Activated B cell treated with CpG ODN at 0.5 μM for 24 hours (primary cell): ENCODE measurements at regions of chr5 and their contacts with region 1.

Region 1: GRCh38 chr5:158898185-158899177 is 201.2 kb downstream of the EBF1 start:
- DNase-seq: peak; percentile 33
- ATAC-seq: peak; percentile 74
- H3K4me3 Mint-ChIP-seq: peak overlapping the region; percentile 25
- H3K27ac Mint-ChIP-seq: peak overlapping the region; percentile 93
- H3K4me1 Mint-ChIP-seq: peaks cover 78% of the 10 kb centered on the region
- H3K27me3 Mint-ChIP-seq: no peaks in the 10 kb centered on the region
- CTCF ChIP-seq: no peak

Region 2: DNA sequence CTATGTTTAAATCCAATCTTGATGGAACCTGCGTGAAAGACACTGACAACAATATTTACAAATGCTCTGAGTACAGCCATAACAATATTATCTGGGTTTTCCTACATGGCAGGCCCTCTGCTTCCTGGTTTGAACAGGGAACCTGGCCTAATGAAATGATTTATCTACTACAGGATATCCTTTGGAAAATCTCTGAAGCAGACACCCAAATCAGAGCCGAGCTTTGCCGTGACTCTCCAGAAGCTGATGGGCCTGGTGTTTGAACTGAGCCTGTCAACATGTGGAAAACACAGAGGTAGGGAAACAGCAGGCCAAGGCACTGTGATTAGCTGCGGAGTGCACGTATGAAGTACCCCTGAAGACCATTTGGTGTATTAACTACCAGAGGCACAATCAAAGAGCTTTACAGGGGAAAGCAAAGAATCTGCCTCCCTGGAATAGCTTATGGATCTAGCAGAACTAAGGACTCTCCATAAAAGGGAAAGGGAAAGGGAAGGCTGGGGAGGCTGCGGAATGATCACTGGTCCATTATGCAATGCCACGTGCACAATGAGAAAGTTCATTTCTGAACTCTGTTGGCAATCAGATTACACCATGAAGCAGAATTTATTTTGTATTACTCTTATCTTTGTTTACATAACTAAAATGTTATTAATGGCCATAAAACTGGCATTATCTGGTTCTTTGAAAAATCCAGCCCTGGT is 120.7 kb before region 1 on chr5:
- CTCF ChIA-PET with region 1: no interaction called
- POLR2A ChIA-PET with region 1: interaction called, 11 read pairs
- intact Hi-C with region 1: loop called (anchors 1 kb)
- DNase-seq: no peak
- ATAC-seq: no peak
- H3K4me3 Mint-ChIP-seq: no peak overlapping the region
- H3K27ac Mint-ChIP-seq: peak overlapping the region; percentile 92
- H3K4me1 Mint-ChIP-seq: peaks cover 92% of the 10 kb centered on the region
- H3K27me3 Mint-ChIP-seq: no peaks in the 10 kb centered on the region
- CTCF ChIP-seq: no peak

Region 3: GRCh38 chr5:158819840-158820620 is 78.5 kb before region 1 on chr5:
- CTCF ChIA-PET with region 1: no interaction called
- POLR2A ChIA-PET with region 1: interaction called, 15 read pairs
- intact Hi-C with region 1: loop called (anchors 1 kb)
- DNase-seq: no peak
- ATAC-seq: peak; percentile 76
- H3K4me3 Mint-ChIP-seq: peak overlapping the region; percentile 75
- H3K27ac Mint-ChIP-seq: peak overlapping the region; percentile 95
- H3K4me1 Mint-ChIP-seq: peaks cover 99% of the 10 kb centered on the region
- H3K27me3 Mint-ChIP-seq: no peaks in the 10 kb centered on the region
- CTCF ChIP-seq: no peak

Region 4: GRCh38 chr5:158880483-158881001 is 17.9 kb before region 1 on chr5:
- CTCF ChIA-PET with region 1: interaction called, 9 read pairs
- POLR2A ChIA-PET with region 1: interaction called, 20 read pairs
- intact Hi-C with region 1: loop called (anchors 1 kb)
- DNase-seq: no peak
- ATAC-seq: peak; percentile 28
- H3K4me3 Mint-ChIP-seq: peak overlapping the region; percentile 70
- H3K27ac Mint-ChIP-seq: peak overlapping the region; percentile 88
- H3K4me1 Mint-ChIP-seq: peaks cover 95% of the 10 kb centered on the region
- H3K27me3 Mint-ChIP-seq: no peaks in the 10 kb centered on the region
- CTCF ChIP-seq: no peak

Region 5: DNA sequence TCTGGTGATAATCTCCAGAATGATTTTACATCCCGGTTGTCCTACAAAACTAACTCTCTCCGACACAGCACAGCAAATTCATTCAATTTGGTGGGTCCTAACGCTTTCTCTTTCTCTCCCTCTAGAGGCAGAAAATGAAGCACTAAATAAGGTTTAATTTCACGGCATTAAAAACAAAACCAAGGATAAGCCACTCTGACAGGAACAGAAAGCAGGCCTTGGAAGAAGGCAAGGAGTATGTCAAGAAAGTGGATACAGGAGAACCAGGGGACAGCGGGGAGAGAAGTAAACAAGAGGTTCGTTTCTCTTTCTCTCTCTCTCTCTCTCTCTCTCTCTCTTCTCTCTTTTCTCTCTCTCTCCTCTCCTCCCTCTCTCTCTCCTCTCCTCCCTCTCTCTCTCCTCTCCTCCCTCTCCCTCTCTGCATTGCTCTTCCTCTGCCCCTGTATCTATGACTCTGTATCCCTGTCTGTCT is 151.4 kb after region 1 on chr5:
- CTCF ChIA-PET with region 1: no interaction called
- POLR2A ChIA-PET with region 1: interaction called, 7 read pairs
- intact Hi-C with region 1: loop called (anchors 1 kb)
- DNase-seq: no peak
- ATAC-seq: no peak
- H3K4me3 Mint-ChIP-seq: peak overlapping the region; percentile 76
- H3K27ac Mint-ChIP-seq: peak overlapping the region; percentile 93
- H3K4me1 Mint-ChIP-seq: peaks cover 97% of the 10 kb centered on the region
- H3K27me3 Mint-ChIP-seq: no peaks in the 10 kb centered on the region
- CTCF ChIP-seq: no peak